ENCODE measurements at regions of chr19 and their contacts with region 1.

Region 1: GRCh38 chr19:23394511-23394910 is 760 bp downstream of the ZNF91 start:
- DNase-seq: peak; percentile 45
- H3K4me3 ChIP-seq: peak overlapping the region; percentile 81
- H3K27ac ChIP-seq: peak overlapping the region; percentile 96
- H3K4me1 ChIP-seq: no peaks in the 10 kb centered on the region
- H3K27me3 ChIP-seq: no peaks in the 10 kb centered on the region
- CTCF ChIP-seq: no peak

Region 2: GRCh38 chr19:23273590-23274413 is 120.7 kb before region 1 on chr19:
- intact Hi-C with region 1: loop called (anchors 5 kb)
- DNase-seq: peak; percentile 96
- H3K4me3 ChIP-seq: peak overlapping the region; percentile 91
- H3K27ac ChIP-seq: peak overlapping the region; percentile 89
- H3K4me1 ChIP-seq: no peaks in the 10 kb centered on the region
- H3K27me3 ChIP-seq: no peaks in the 10 kb centered on the region
- CTCF ChIP-seq: no peak

Measured in colonic mucosa (tissue), 4 donors.